HEK293 (cell line): ENCODE measurements at regions of chr10 and their contacts with region 1.

Region 1: DNA sequence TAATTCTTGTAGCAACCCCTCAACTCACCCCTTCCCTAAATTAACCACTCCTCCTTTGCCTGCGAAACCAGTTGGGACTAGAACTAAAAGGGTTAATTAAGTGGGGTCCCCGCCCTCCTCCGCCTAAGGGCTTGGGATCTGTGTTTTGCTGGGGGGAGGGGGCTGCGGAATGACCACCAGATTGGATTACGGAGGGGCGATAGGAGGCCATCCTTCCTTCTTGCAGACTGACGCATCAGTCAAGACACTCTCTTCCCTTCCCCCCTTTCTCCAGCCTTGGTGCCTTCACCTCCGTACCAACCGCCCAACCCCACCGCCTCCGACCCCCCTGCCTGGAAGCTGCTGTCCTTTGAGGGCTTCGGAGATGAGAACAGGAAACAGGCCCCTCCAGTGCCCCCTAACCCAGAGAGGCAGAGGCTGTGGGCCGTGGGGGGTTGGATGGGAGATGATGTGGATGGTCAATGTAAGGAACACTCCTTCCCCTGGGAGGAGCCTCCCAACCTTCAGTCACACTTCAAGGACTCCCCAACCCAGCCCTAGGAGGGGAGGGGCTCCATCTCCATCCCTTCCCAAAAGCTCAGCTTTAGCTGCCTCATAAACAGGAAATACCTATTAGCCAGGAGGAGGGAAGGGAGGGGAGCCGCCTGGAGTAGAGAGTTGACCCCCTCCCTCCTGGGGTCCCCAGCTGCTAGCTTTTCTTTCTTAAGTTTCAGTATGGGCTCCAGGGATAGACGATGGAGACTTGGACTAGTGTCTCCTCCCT is 1.0 kb upstream of the LDB1 start:
- H3K4me3 ChIP-seq: peak overlapping the region; percentile 71; the same call in 1 of the 2 replicates
- H3K27ac ChIP-seq: peak overlapping the region; percentile 88; the same call in 1 of the 2 replicates
- H3K4me1 ChIP-seq: peaks cover 32% of the 10 kb centered on the region
- CTCF ChIP-seq: no peak

Region 2: GRCh38 chr10:102132563-102133372 is 11.6 kb after region 1 on chr10 and contains the start of gene PPRC1:
- CTCF ChIA-PET with region 1: interaction called, 11 read pairs
- POLR2A ChIA-PET with region 1: interaction called, 4 read pairs
- H3K4me3 ChIP-seq: peak within 1 kb of the TSS; percentile 93
- H3K27ac ChIP-seq: peak within 1 kb of the TSS; percentile 99
- H3K4me1 ChIP-seq: peaks cover 22% of the 10 kb centered on the region
- CTCF ChIP-seq: peak; percentile 98